Heart left ventricle (tissue), 16 donors: ENCODE measurements at regions of chr16 and their contacts with region 1.

Region 1: GRCh38 chr16:53172517-53172916 is 117.7 kb downstream of the CHD9 start:
- DNase-seq: no peak
- ATAC-seq: no peak
- H3K4me3 ChIP-seq: no peak overlapping the region
- H3K27ac ChIP-seq: no peak overlapping the region
- H3K4me1 ChIP-seq: peaks cover 0 to 12% (median 0%) of the 10 kb centered on the region in 12 donors
- H3K27me3 ChIP-seq: no peaks in the 10 kb centered on the region
- CTCF ChIP-seq: no peak
- POLR2A ChIP-seq: no peak

Region 2: DNA sequence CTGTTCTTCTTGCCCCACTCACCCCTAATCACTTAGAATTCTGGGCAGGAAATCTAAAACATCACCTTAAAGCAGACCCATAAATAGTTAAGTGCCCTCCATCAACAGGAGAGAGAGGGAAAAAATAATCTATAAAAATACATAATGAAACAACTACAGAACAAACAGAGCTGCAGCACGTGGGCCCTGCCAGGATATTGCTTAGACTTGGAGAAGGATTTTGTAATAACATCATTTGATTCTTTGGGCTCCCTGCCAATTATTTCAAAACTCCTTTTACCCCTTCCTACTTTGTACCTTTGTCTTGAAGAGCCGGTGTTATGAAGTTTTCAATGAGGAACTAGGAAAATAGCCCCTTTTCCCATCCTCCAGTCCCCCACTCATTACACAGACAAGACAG is 495.0 kb before region 1 on chr16:
- intact Hi-C with region 1: no loop called
- DNase-seq: no peak
- ATAC-seq: no peak
- H3K4me3 ChIP-seq: no peak overlapping the region
- H3K27ac ChIP-seq: no peak overlapping the region
- H3K4me1 ChIP-seq: no peaks in the 10 kb centered on the region
- H3K27me3 ChIP-seq: no peaks in the 10 kb centered on the region
- CTCF ChIP-seq: no peak
- POLR2A ChIP-seq: no peak

Region 3: GRCh38 chr16:53207810-53208752 is 35.6 kb after region 1 on chr16:
- intact Hi-C with region 1: loop called in 1 of 10 experiments (anchors 5 kb)
- DNase-seq: peak in 4 of 5 donors; percentile 41 to 52 (median 43)
- ATAC-seq: peak; percentile 90 to 96 (median 93)
- H3K4me3 ChIP-seq: peak overlapping the region; percentile 11 to 65 (median 56)
- H3K27ac ChIP-seq: peak overlapping the region; percentile 66 to 92 (median 82)
- H3K4me1 ChIP-seq: peaks cover 3 to 58% (median 33%) of the 10 kb centered on the region in 12 donors
- H3K27me3 ChIP-seq: no peaks in the 10 kb centered on the region
- CTCF ChIP-seq: peak; percentile 33 to 75 (median 54)
- POLR2A ChIP-seq: no peak